ENCODE measurements at regions of chr14 and their contacts with region 1.

Region 1: DNA sequence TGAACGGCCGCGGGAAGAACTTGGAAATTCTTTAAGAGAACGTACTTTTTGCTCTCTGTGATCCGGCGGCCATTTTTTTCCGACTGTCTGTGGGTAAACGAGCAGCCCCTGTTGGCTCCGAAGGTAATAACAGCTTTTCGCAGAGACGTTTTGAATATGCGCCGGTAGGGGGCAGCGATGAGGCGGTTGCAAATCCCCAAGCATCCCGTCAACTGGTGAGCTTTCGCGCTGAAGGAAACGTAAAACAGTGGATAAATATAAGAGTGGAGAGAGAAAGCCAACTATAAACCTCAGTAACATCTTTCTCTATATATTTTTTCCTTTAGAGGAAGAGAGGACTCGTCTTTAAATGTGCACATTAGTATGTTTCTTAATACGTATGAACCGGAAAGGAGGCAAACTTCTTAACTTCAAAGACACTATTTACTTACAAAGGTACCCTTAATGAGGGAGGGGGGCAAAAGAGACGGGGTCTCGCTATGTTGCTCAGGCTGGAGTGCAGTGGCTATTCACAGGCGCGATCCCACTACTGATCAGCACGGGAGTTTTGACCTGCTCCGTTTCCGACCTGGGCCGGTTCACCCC is 9.6 kb upstream of the NEMF start:
- DNase-seq: peak; percentile 86
- ATAC-seq: peak; percentile 9
- H3K4me3 Mint-ChIP-seq: no peak overlapping the region
- H3K27ac Mint-ChIP-seq: no peak overlapping the region
- H3K4me1 Mint-ChIP-seq: peaks cover 22% of the 10 kb centered on the region
- H3K27me3 Mint-ChIP-seq: no peaks in the 10 kb centered on the region

Region 2: GRCh38 chr14:49620182-49621113 is 241.7 kb before region 1 on chr14 and contains the starts of genes MGAT2 and RPL36AL:
- POLR2A ChIA-PET with region 1: interaction called, 15 read pairs
- DNase-seq: peak; percentile 95
- ATAC-seq: peak; percentile 91
- H3K4me3 Mint-ChIP-seq: peak within 1 kb of the TSS; percentile 97
- H3K27ac Mint-ChIP-seq: peak within 1 kb of the TSS; percentile 94
- H3K4me1 Mint-ChIP-seq: peaks cover 34% of the 10 kb centered on the region
- H3K27me3 Mint-ChIP-seq: no peaks in the 10 kb centered on the region
- total RNA-seq, gene MGAT2: 54.6 to 55.0 TPM
- total RNA-seq, gene RPL36AL: 238 to 254 TPM

Region 3: DNA sequence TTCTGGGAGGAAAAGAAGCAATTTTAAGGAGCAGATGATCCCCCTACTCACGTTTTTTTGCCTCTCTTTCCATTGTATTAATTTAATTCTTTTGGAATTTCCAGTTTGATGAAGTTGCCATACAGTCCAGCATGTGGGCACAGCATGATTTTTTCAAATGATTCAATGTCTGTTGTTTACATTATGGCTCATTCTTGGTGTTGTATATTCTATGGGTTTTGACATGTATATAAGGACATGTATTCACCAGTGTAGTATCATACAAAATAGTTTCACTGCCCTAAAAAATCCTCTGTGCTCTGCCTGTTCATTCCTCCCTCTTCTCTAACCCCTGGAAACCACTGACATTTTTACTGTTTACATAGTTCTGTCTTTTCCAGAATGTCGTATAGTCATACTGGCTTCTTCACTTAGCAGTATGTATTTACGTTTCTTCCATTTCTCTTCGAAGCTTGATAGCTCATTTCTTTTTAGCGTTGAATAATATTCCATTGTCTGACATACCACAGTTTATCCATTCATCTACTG is 107.5 kb before region 1 on chr14:
- POLR2A ChIA-PET with region 1: no interaction called
- DNase-seq: no peak
- ATAC-seq: no peak
- H3K4me3 Mint-ChIP-seq: no peak overlapping the region
- H3K27ac Mint-ChIP-seq: no peak overlapping the region
- H3K4me1 Mint-ChIP-seq: no peaks in the 10 kb centered on the region
- H3K27me3 Mint-ChIP-seq: peaks cover 6% of the 10 kb centered on the region

Region 4: GRCh38 chr14:49879683-49880204 is 17.6 kb after region 1 on chr14:
- POLR2A ChIA-PET with region 1: interaction called, 16 read pairs
- DNase-seq: peak; percentile 44
- ATAC-seq: peak; percentile 96
- H3K4me3 Mint-ChIP-seq: no peak overlapping the region
- H3K27ac Mint-ChIP-seq: peak overlapping the region; percentile 46
- H3K4me1 Mint-ChIP-seq: peaks cover 15% of the 10 kb centered on the region
- H3K27me3 Mint-ChIP-seq: no peaks in the 10 kb centered on the region

Region 5: DNA sequence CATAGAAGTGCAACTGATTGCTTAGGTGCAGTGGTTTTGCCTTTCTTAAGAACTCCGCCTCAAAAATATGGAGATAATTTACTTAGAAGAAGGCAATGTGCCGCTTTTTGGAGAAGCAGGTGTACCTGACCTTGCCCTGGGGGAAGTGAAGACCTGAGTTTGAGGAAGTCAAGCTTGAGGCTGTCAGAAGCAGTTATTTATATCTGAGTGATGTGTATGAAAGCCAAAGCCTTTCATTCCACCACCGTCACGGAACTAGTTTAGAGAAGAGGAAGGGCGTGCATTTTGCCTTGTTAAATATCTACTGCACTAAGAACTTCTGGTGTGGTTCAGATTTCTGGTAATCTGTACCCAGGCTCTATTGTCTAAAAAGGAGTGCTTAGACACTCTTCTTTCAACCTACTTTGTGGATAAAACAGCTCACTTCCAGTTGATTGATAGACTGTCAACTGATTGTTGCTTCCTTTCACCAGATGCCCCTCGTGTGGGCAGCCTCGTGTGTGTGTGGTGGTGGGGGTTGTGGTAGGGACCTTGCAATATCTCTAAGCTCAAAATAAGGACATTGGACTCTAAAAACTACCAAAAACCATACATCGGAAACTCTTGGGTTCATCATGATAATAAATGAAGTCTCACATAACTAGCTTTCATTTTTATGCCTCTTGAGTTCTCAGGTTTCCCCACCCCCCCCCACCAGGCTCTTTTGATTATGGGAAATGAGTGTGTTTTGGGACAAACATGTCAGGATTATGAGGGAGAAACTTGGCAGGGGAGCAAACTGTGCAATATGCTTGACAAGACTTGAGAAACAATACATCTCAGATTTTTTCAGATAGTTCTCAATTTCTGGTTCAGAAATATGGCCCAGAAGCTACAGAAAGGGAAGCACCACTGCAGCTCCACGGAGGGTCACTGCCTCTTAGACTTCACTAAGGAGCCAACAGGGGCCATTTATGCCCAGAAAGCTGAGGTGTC is 109.3 kb after region 1 on chr14:
- POLR2A ChIA-PET with region 1: interaction called, 53 read pairs
- DNase-seq: peak; percentile 73
- ATAC-seq: peak; percentile 80
- H3K4me3 Mint-ChIP-seq: peak overlapping the region; percentile 91
- H3K27ac Mint-ChIP-seq: peak overlapping the region; percentile 99
- H3K4me1 Mint-ChIP-seq: peaks cover 50% of the 10 kb centered on the region
- H3K27me3 Mint-ChIP-seq: no peaks in the 10 kb centered on the region

Region 6: DNA sequence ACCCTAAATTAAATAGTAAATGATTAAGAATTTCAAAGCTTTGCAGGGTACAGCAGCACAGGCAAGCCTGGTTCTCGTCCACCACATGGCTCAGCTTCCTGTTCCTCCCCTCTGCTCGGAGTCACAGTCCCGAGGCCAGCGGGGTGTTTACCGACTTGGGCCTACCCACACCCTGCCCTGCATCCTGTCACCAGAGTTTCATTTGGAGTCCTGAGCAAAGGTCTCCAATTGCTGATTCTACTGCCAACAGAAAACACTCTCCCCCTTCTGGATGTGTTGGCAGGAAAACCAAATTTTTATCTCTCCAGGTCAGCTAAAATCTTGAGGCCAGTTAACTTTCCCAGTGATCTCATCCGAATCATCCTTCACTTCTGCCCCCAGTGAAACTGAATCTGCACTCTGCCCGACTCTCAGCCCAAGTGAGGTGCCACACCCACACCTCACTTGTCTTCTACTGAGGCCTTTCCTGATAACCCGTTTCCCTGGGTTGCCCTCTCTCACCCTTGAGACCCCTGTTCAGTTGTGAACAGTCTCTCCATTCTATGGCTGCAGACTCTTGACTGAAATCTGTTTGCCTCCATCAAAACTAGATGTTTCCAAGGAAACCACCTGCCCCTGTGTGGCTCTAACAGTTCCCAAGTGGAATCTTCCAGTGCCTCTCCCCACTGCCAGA is 183.0 kb after region 1 on chr14:
- POLR2A ChIA-PET with region 1: interaction called, 35 read pairs
- DNase-seq: peak; percentile 74
- ATAC-seq: peak; percentile 91
- H3K4me3 Mint-ChIP-seq: peak overlapping the region; percentile 54
- H3K27ac Mint-ChIP-seq: peak overlapping the region; percentile 93
- H3K4me1 Mint-ChIP-seq: peaks cover 58% of the 10 kb centered on the region
- H3K27me3 Mint-ChIP-seq: no peaks in the 10 kb centered on the region

Region 7: DNA sequence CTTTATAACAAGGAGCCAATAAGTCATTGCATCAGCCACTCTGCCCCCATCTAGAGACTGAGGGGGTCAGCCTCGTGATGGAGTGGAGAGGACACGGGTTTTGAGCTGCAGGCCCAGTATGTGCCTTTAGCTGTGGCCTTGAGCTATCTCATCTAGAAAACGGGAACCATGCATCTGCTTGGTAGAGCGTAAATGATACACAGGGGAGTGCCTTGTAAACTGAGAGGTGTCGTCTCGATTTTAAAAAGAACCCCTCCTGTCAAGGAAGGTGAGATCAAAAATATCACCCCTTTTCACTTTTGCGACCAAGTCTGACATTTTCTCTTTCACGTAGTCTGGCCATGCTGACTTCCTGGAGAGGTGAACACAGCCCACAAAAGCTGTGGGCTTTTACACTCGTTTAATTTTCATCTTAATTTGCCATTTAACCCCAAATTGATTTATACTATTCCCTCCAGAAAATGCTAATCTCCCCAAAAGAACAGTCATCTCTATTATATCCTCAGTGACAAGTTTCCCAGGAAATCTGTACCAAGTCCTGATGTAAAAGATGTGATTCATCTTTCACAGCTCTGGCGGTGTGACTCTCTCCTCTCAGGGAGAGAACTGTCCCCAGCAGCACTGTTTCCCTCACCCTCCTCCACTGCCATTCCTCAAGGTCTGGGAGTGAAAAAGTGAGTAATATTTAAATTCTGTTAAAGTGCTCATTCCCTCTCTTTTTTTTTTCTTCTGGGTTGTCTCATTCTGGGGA is 223.6 kb after region 1 on chr14:
- POLR2A ChIA-PET with region 1: interaction called, 72 read pairs
- DNase-seq: no peak
- ATAC-seq: no peak
- H3K4me3 Mint-ChIP-seq: peak overlapping the region; percentile 69
- H3K27ac Mint-ChIP-seq: peak overlapping the region; percentile 94
- H3K4me1 Mint-ChIP-seq: peaks cover 76% of the 10 kb centered on the region
- H3K27me3 Mint-ChIP-seq: no peaks in the 10 kb centered on the region

Region 8: DNA sequence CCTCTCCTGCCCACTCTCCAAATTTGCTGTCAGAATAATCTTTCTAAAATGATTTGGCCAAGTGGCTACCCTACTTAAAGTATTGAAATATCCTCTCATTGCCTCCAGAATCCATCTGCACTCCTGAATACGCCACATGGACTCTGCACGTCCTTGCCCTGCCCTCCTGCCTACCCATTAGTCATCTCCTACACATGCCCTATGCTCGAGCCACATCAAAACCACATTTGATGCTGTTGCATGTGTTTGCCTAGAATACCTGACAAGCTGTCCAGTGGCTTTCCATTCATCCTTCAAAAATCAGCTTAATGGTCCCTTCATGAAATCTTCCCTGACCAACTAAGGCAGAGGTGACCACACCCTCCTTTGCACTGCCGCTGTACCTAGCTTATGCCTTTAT is 237.2 kb after region 1 on chr14:
- POLR2A ChIA-PET with region 1: interaction called, 58 read pairs
- DNase-seq: no peak
- ATAC-seq: peak; percentile 46
- H3K4me3 Mint-ChIP-seq: peak overlapping the region; percentile 33
- H3K27ac Mint-ChIP-seq: peak overlapping the region; percentile 70
- H3K4me1 Mint-ChIP-seq: peaks cover 56% of the 10 kb centered on the region
- H3K27me3 Mint-ChIP-seq: no peaks in the 10 kb centered on the region

Region 9: DNA sequence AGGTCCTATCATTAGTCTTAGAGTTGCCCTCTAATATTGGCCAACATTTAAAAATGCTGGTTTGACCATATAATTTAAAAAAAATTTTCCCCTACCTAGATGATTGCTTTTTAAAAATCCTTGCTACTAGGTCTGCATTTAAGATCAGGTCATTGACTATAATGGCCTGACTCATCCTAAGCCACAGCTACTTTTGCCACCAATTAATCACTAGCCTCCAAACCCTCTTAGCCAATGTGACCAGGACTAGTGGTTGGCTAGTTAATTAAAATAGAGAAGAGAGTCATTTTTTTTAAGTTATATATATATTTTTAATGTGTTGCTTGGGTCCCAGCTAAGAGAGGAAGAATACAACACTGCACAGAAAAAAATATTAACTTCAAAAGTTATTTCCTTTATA is 311.7 kb after region 1 on chr14:
- POLR2A ChIA-PET with region 1: no interaction called
- DNase-seq: no peak
- ATAC-seq: no peak
- H3K4me3 Mint-ChIP-seq: no peak overlapping the region
- H3K27ac Mint-ChIP-seq: no peak overlapping the region
- H3K4me1 Mint-ChIP-seq: no peaks in the 10 kb centered on the region
- H3K27me3 Mint-ChIP-seq: no peaks in the 10 kb centered on the region